Activated CD4-positive, alpha-beta memory T cell treated with anti-CD3 and anti-CD28 coated beads for 36 hours (primary cell): ENCODE measurements at regions of chr10 and their contacts with region 1.

Region 1: GRCh38 chr10:26860443-26861204 is at the start of gene ABI1:
- DNase-seq: peak; percentile 98
- H3K4me3 Mint-ChIP-seq: peak within 1 kb of the TSS; percentile 90
- H3K27ac Mint-ChIP-seq: peak within 1 kb of the TSS; percentile 96
- H3K4me1 Mint-ChIP-seq: peaks cover 26% of the 10 kb centered on the region
- H3K27me3 Mint-ChIP-seq: no peaks in the 10 kb centered on the region
- total RNA-seq, gene ABI1: 55.5 to 56.2 TPM

Region 2: DNA sequence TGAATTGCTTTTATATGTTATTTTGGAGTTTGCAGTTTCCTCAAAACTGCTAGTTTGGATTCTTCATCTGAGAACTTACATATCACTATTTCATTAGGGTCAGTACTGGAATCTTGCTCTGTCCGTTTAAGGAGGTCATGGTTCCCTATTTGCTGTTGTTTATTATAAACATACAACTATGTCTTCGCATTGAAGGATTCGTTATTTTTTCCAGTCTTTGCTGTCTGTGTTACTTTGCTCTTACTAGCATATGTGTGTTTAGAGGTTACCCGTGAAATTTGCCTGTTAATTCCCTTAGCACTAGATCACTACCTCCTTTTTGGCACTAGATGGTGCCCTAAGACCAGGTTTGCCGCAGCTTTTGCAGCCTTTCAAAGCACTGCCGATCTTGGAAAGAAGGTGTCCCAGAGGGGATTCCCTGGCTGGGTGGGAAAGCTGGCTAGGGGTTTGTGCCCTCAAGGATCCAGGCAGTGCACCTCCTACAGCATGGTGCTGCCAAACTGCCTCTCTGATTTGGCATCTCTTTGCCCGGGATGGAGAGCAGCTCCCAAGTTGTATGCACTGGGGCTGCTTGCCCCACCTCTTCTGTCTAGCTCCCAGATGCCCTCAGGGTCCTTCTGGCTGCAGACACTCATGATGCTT is 525.6 kb before region 1 on chr10:
- CTCF ChIA-PET with region 1: no interaction called
- POLR2A ChIA-PET with region 1: no interaction called
- intact Hi-C with region 1: loop called (anchors 5 kb)
- DNase-seq: peak; percentile 73
- H3K4me3 Mint-ChIP-seq: peak overlapping the region; percentile 67
- H3K27ac Mint-ChIP-seq: peak overlapping the region; percentile 36
- H3K4me1 Mint-ChIP-seq: peaks cover 6% of the 10 kb centered on the region
- H3K27me3 Mint-ChIP-seq: no peaks in the 10 kb centered on the region

Region 3: GRCh38 chr10:26697163-26697921 is 163.3 kb before region 1 on chr10 and contains the start of gene PDSS1:
- CTCF ChIA-PET with region 1: interaction called, 4 read pairs
- POLR2A ChIA-PET with region 1: interaction called, 4 read pairs
- intact Hi-C with region 1: loop called (anchors 1 kb)
- DNase-seq: peak; percentile 75
- H3K4me3 Mint-ChIP-seq: peak within 1 kb of the TSS; percentile 99
- H3K27ac Mint-ChIP-seq: peak within 1 kb of the TSS; percentile 92
- H3K4me1 Mint-ChIP-seq: peaks cover 25% of the 10 kb centered on the region
- H3K27me3 Mint-ChIP-seq: no peaks in the 10 kb centered on the region
- total RNA-seq, gene PDSS1: 12.9 to 15.4 TPM

Region 4: GRCh38 chr10:26780793-26781601 is 79.6 kb before region 1 on chr10:
- CTCF ChIA-PET with region 1: interaction called, 6 read pairs
- POLR2A ChIA-PET with region 1: no interaction called
- intact Hi-C with region 1: loop called (anchors 1 kb)
- DNase-seq: peak; percentile 66
- H3K4me3 Mint-ChIP-seq: peak overlapping the region; percentile 21
- H3K27ac Mint-ChIP-seq: peak overlapping the region; percentile 82
- H3K4me1 Mint-ChIP-seq: peaks cover 81% of the 10 kb centered on the region
- H3K27me3 Mint-ChIP-seq: no peaks in the 10 kb centered on the region

Region 5: DNA sequence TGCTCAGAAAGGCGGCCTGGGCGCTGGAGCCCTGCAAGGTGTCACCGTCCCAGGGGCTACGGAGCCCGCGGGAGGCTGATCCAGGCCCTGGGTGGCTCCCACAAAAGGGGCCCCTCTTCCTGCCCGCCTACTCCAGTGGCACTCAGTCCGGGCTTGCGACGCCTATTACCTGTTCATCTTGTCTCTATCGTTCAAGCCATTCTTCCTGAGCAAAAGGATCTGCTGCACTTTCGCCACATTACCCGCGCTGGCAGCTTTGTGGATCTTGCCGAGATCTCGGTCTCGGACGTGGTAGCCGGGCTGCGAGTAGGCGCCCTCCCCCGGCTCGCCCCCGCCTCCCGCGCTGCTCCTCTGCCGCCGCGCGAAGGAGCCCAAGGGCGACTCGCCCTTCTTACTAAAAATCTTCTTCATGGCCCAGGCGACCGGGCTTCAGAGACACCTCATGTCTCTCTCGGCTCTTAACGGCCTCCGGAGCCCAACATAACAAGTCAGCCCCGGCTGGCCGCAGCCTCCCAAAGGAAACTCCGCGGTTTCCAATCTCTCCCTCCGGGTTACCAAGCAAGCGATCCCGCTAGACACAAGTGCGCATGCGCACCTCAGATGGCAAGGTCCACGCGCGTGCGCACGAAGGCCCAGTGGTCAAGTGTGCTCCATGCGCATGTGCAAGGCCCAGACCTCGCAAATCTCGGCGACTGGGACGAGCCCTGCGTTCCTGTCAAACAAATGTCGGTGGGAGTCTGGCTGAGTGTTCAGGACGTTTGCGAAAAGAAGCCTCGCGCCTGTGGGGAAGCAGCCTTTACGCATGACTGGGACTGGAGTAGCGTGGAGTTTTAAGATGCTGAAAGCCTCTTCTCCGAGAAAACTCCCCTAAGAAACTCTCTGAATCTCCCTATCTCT is 239.5 kb after region 1 on chr10 and contains the start of gene ANKRD26:
- CTCF ChIA-PET with region 1: no interaction called
- POLR2A ChIA-PET with region 1: no interaction called
- intact Hi-C with region 1: loop called (anchors 2 kb)
- DNase-seq: peak; percentile 97
- H3K4me3 Mint-ChIP-seq: peak within 1 kb of the TSS; percentile 85
- H3K27ac Mint-ChIP-seq: peak within 1 kb of the TSS; percentile 95
- H3K4me1 Mint-ChIP-seq: peaks cover 40% of the 10 kb centered on the region
- H3K27me3 Mint-ChIP-seq: peaks cover 2% of the 10 kb centered on the region
- total RNA-seq, gene ANKRD26: 6.7 to 7.1 TPM